ENCODE measurements at regions of chr20 and their contacts with region 1.

Region 1: GRCh38 chr20:43977252-43977651 is 62.6 kb downstream of the TOX2 start:
- DNase-seq: no peak
- ATAC-seq: no peak
- H3K4me3 ChIP-seq: no peak overlapping the region
- H3K27ac ChIP-seq: no peak overlapping the region
- H3K4me1 ChIP-seq: no peaks in the 10 kb centered on the region
- H3K27me3 ChIP-seq: no peaks in the 10 kb centered on the region
- CTCF ChIP-seq: no peak
- EP300 ChIP-seq: no peak
- POLR2A ChIP-seq: no peak
- RAD21 ChIP-seq: no peak

Region 2: DNA sequence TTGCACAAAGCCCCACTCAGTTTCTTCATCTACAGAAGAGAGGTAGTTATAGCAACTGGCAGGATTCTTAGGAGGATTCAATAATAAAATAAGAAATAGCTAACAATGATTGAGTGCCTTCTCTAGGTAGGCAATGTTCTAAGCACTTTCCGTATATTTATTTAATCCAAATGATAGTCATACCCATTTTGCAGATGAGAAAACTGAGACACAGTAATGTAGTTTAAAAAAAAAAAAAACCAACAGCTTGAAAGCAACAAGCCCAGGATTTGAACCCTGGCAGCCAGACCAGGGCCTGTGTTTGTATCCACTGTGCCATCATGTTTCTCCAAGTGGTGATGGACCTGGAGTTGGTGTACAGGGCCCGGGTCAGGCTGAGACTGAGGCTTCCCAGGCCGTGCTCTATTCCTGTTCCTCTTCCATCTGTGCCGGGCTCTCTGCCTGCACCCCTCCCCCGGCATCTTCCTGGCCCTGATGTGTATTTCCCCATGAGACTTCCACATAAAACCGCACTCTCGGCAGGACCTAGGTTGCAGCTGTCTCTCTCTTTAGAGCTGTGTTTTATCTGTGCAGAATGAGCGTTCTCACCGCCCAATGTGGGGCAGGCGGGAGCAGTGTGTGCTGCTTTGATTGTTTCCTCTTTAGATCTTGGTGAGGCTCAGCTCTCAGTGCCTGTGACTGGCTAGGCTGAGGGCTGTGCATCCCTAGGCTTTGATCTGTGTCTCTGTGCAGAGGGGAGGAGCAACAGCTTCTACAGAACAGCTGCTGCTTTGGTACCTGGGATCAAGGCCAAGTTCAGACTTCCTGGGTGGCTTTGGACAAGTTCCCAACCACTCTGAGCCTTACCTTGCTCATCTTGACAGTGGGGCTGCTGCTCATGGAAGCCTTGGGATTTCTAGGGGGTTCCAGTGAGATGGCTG is 13.1 kb before region 1 on chr20:
- CTCF ChIA-PET with region 1: interaction called, 7 read pairs
- POLR2A ChIA-PET with region 1: interaction called, 13 read pairs
- RAD21 ChIA-PET with region 1: interaction called, 5 read pairs
- SMC1A ChIA-PET with region 1: interaction called, 19 read pairs
- in situ Hi-C with region 1: no loop called
- intact Hi-C with region 1: no loop called
- DNase-seq: no peak
- ATAC-seq: peak; percentile 76
- H3K4me3 ChIP-seq: no peak overlapping the region
- H3K27ac ChIP-seq: no peak overlapping the region
- H3K4me1 ChIP-seq: peaks cover 15% of the 10 kb centered on the region
- H3K27me3 ChIP-seq: no peaks in the 10 kb centered on the region
- CTCF ChIP-seq: no peak
- EP300 ChIP-seq: no peak
- POLR2A ChIP-seq: no peak
- RAD21 ChIP-seq: no peak

Region 3: GRCh38 chr20:43988867-43989266 is 11.6 kb after region 1 on chr20:
- CTCF ChIA-PET with region 1: interaction called, 6 read pairs
- POLR2A ChIA-PET with region 1: no interaction called
- RAD21 ChIA-PET with region 1: interaction called, 3 read pairs
- SMC1A ChIA-PET with region 1: interaction called, 32 read pairs
- in situ Hi-C with region 1: no loop called
- intact Hi-C with region 1: no loop called
- DNase-seq: no peak
- ATAC-seq: peak; percentile 37
- H3K4me3 ChIP-seq: no peak overlapping the region
- H3K27ac ChIP-seq: no peak overlapping the region
- H3K4me1 ChIP-seq: peaks cover 4% of the 10 kb centered on the region
- H3K27me3 ChIP-seq: no peaks in the 10 kb centered on the region
- CTCF ChIP-seq: no peak
- EP300 ChIP-seq: no peak
- POLR2A ChIP-seq: no peak
- RAD21 ChIP-seq: peak; percentile 20; the same call in 1 of the 2 replicates

Measured in GM12878 (cell line).